ENCODE measurements at regions of chr15 and their contacts with region 1.

Region 1: DNA sequence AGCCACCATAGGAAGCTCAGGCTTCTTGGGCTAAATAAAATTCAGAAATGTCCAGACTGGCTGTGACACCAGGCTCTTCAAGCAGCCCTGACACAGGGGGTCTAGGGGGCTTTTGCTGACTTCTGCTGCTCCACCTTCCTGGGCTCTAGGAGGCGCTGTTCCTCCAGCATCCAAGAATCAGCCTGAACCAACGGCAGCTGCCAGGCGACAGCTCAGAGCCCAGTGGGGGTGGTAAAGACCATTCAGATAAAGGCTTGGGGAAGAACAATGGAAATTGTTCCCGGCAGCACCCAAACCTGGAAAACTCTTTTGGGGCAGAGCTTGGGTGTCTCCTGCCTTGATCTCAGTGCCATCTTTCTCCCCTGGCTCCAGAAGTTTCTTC is 21.6 kb upstream of the PSTPIP1 start:
- DNase-seq: peak; percentile 50 to 67 (median 61)
- H3K4me3 ChIP-seq: no peak overlapping the region
- H3K4me3 Mint-ChIP-seq: no peak overlapping the region
- H3K27ac ChIP-seq: no peak overlapping the region
- H3K27ac Mint-ChIP-seq: peak overlapping the region in 2 of 7 donors; percentile 29 to 41
- H3K4me1 ChIP-seq: no peaks in the 10 kb centered on the region
- H3K4me1 Mint-ChIP-seq: peaks cover 4 to 13% (median 8%) of the 10 kb centered on the region in 4 donors
- H3K27me3 ChIP-seq: no peaks in the 10 kb centered on the region
- H3K27me3 Mint-ChIP-seq: no peaks in the 10 kb centered on the region

Region 2: DNA sequence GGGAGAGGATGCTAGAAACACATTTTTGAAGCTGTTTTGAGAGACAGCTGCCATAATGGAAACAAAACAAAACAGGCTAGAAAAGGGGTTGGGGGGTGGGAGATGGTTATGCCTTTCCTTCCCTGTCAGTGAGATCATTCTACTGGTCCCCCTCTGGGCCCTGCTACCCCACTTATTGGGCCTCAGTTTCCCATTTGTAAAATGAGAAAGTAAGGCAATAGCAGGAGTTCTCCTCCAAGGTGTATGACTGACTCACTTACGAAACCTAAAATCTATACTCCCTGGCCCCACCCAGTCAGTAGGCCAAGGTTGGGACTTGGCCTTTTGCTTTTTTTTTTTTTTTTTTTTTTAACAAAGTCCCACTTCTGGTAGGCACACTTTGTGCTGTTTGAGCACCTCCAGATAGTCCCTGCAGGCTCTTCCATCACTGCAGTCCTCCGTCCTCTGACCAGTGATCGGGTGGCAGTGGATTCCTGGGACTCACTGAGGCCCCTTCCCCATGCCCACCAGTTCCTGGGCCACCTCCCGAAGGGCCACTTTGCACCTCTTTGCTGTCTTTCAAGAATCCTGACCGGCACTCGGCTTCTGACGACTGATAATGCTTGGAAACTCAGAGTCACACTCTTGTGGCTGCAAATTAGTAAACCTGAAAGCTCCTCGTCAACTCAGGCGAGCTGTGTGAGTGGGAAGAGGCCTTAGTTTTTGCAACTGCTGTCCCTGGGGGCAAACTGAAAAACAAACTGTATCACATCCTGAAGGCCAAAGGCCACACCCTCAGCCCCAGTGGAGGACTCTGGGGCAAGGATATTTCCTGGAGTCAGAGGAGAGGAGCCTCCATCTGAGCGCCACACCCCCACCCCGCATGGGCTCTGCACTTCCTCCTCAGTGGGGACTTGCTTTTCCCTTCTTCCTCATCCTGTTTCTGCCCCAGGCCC is 14.8 kb after region 1 on chr15:
- CTCF ChIA-PET with region 1: interaction called, 17 read pairs
- POLR2A ChIA-PET with region 1: interaction called, 17 read pairs
- intact Hi-C with region 1: no loop called
- DNase-seq: peak in 1 of 5 donors; percentile 10
- H3K4me3 ChIP-seq: peak overlapping the region in 1 of 2 donors; percentile 14
- H3K4me3 Mint-ChIP-seq: peak overlapping the region in 7 of 8 donors; percentile 52 to 86 (median 77)
- H3K27ac ChIP-seq: peak overlapping the region; percentile 27
- H3K27ac Mint-ChIP-seq: peak overlapping the region; percentile 38 to 92 (median 84)
- H3K4me1 ChIP-seq: peaks cover 33% of the 10 kb centered on the region
- H3K4me1 Mint-ChIP-seq: peaks cover 24 to 63% (median 31%) of the 10 kb centered on the region in 4 donors
- H3K27me3 ChIP-seq: no peaks in the 10 kb centered on the region
- H3K27me3 Mint-ChIP-seq: no peaks in the 10 kb centered on the region

Region 3: GRCh38 chr15:77002954-77003912 is 29.9 kb after region 1 on chr15:
- CTCF ChIA-PET with region 1: interaction called, 55 read pairs
- POLR2A ChIA-PET with region 1: interaction called, 5 read pairs
- intact Hi-C with region 1: no loop called
- DNase-seq: peak; percentile 71 to 88 (median 76)
- H3K4me3 ChIP-seq: peak overlapping the region in 1 of 2 donors; percentile 33
- H3K4me3 Mint-ChIP-seq: peak overlapping the region; percentile 69 to 85 (median 80)
- H3K27ac ChIP-seq: peak overlapping the region; percentile 68
- H3K27ac Mint-ChIP-seq: peak overlapping the region; percentile 92 to 96 (median 94)
- H3K4me1 ChIP-seq: peaks cover 98% of the 10 kb centered on the region
- H3K4me1 Mint-ChIP-seq: peaks cover 53 to 96% (median 80%) of the 10 kb centered on the region in 4 donors
- H3K27me3 ChIP-seq: no peaks in the 10 kb centered on the region
- H3K27me3 Mint-ChIP-seq: no peaks in the 10 kb centered on the region

Region 4: DNA sequence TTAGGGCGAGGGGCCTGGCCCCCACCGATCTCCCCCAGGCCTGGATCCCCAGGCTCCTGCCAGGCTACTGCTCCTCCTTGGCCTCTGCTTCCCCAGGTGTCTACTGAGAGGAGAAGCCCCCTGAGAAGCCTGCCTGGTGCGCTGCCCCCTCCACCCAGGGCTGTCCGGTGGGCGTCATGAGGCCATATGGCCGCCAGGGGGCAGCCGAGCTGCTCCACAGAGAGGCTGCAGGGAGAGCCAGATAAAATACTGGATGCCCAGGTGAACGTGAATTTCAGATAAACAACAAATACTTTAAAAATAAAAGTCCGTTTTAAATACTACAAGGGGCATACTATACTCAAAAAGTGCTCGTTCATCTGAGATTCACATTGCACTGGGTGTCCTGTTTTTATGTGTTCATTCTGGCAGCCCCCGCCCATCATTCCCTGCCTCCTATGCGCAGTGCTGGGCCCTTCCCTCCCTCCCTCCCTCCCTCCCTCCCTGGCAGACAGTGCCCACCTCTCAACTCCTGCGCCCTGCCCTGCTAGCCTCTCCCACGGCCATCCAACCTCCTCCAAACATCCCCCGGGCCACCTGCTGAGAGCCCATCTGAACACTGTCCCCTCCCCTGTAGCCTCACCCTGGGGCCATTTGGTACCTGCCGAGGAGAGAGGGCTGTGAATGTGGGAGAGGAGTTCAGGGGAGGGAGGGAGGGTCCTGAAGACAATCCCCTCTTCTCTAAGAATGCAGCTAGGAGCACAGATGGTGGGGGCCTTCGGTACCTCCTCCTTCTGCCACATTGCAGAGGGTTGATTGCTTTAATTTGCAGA is 51.1 kb after region 1 on chr15:
- CTCF ChIA-PET with region 1: interaction called, 65 read pairs
- POLR2A ChIA-PET with region 1: interaction called, 7 read pairs
- intact Hi-C with region 1: loop called (anchors 2 kb)
- DNase-seq: peak; percentile 55 to 66 (median 59)
- H3K4me3 ChIP-seq: no peak overlapping the region
- H3K4me3 Mint-ChIP-seq: peak overlapping the region in 1 of 8 donors; percentile 70
- H3K27ac ChIP-seq: peak overlapping the region; percentile 41
- H3K27ac Mint-ChIP-seq: peak overlapping the region; percentile 77 to 100 (median 98)
- H3K4me1 ChIP-seq: peaks cover 48% of the 10 kb centered on the region
- H3K4me1 Mint-ChIP-seq: peaks cover 28 to 50% (median 43%) of the 10 kb centered on the region in 4 donors
- H3K27me3 ChIP-seq: no peaks in the 10 kb centered on the region
- H3K27me3 Mint-ChIP-seq: no peaks in the 10 kb centered on the region

Region 5: GRCh38 chr15:77118882-77119321 is 145.5 kb after region 1 on chr15:
- CTCF ChIA-PET with region 1: interaction called, 12 read pairs
- POLR2A ChIA-PET with region 1: no interaction called
- intact Hi-C with region 1: loop called (anchors 5 kb)
- DNase-seq: peak in 4 of 5 donors; percentile 42 to 48 (median 44)
- H3K4me3 ChIP-seq: no peak overlapping the region
- H3K4me3 Mint-ChIP-seq: no peak overlapping the region
- H3K27ac ChIP-seq: no peak overlapping the region
- H3K27ac Mint-ChIP-seq: no peak overlapping the region
- H3K4me1 ChIP-seq: no peaks in the 10 kb centered on the region
- H3K4me1 Mint-ChIP-seq: peaks cover 0 to 3% (median 2%) of the 10 kb centered on the region in 4 donors
- H3K27me3 ChIP-seq: no peaks in the 10 kb centered on the region
- H3K27me3 Mint-ChIP-seq: no peaks in the 10 kb centered on the region

Region 6: DNA sequence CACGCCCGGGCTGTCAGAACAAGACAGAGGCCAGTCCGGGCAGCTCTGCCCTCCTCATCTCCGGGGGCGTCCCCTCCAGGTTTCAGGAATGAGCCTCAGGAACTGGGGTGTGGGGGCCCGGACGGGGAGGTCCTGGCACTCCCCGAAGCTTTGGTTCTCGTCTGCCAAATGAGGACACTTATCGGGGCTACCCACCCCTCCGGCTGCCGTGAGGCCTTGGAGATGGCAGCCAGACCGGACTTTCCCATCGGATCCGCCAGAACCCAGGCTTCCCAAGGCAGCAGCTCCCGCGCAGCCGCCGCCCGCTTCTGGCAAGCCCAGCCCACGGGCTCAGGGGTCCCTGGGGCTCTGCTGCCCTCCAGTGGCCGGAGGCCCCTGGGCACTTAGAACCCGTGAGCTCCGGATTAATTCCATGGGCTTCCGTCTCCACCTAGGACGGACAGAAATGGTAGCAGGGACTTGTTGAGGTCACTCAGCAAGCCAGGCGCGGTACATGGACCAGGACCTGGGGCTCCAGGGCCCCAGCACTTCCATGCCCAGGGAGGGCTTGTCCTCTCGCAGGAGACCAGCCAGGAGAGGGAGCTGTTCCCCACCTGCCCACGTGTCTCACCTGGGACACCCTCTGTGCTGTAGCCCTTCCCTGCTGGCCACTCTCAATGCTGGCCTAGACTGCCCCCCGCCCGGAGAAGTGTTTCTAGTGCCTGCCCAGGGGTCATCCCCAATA is 570.0 kb after region 1 on chr15:
- CTCF ChIA-PET with region 1: interaction called, 27 read pairs
- POLR2A ChIA-PET with region 1: no interaction called
- intact Hi-C with region 1: no loop called
- DNase-seq: peak; percentile 66 to 70 (median 69)
- H3K4me3 ChIP-seq: peak overlapping the region; percentile 42 to 55
- H3K4me3 Mint-ChIP-seq: peak overlapping the region; percentile 73 to 87 (median 80)
- H3K27ac ChIP-seq: peak overlapping the region; percentile 26
- H3K27ac Mint-ChIP-seq: peak overlapping the region in 3 of 7 donors; percentile 22 to 60 (median 55)
- H3K4me1 ChIP-seq: peaks cover 12% of the 10 kb centered on the region
- H3K4me1 Mint-ChIP-seq: peaks cover 2 to 12% (median 4%) of the 10 kb centered on the region in 4 donors
- H3K27me3 ChIP-seq: no peaks in the 10 kb centered on the region
- H3K27me3 Mint-ChIP-seq: no peaks in the 10 kb centered on the region